ENCODE measurements at regions of chr5 and their contacts with region 1.

Region 1: GRCh38 chr5:147935032-147935431 is 28.7 kb upstream of the C5orf46 start:
- DNase-seq: no peak
- H3K4me3 Mint-ChIP-seq: no peak overlapping the region
- H3K27ac Mint-ChIP-seq: no peak overlapping the region
- H3K4me1 Mint-ChIP-seq: no peaks in the 10 kb centered on the region
- H3K27me3 Mint-ChIP-seq: no peaks in the 10 kb centered on the region

Region 2: GRCh38 chr5:147857302-147858129 is 77.5 kb before region 1 on chr5:
- intact Hi-C with region 1: loop called (anchors 5 kb)
- DNase-seq: peak; percentile 12
- H3K4me3 Mint-ChIP-seq: no peak overlapping the region
- H3K27ac Mint-ChIP-seq: no peak overlapping the region
- H3K4me1 Mint-ChIP-seq: peaks cover 1% of the 10 kb centered on the region
- H3K27me3 Mint-ChIP-seq: peaks cover 9% of the 10 kb centered on the region